ENCODE measurements at regions of chr17 and their contacts with region 1.

Region 1: DNA sequence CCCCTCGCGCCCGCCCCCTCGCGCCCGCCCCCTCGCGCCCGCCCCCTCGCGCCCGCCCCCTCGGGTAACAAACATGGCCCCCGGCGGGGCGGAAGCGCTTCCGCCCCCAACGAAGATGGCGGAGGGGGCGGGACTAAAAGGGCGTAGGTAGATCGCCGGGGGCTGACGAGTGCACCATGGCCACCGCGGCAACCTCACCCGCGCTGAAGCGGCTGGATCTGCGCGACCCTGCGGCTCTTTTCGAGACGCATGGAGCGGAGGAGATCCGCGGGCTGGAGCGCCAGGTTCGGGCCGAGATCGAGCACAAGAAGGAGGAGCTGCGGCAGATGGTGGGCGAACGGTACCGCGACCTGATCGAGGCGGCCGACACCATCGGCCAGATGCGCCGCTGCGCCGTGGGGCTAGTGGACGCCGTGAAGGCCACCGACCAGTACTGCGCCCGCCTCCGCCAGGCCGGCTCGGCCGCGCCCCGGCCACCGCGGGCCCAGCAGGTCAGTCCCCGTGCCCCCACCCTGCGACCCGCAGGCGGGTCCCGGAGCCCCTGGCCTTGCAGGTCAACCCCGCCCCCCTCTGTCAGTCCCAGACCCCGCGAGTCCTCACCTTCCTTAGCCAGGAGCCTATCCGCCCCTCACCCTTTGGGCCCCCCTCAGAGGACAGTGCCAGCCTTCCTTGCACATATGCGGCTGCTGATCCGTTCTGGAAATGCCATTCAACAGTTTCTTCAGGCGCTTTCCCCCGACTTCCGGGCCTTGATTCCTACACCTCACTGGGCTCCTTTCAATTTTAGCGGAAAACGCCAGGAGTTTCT is at the start of gene COG1:
- DNase-seq: peak; percentile 89
- H3K4me3 Mint-ChIP-seq: peak within 1 kb of the TSS; percentile 95
- H3K27ac Mint-ChIP-seq: peak within 1 kb of the TSS; percentile 93
- H3K4me1 Mint-ChIP-seq: peaks cover 6% of the 10 kb centered on the region
- H3K27me3 Mint-ChIP-seq: no peaks in the 10 kb centered on the region
- CTCF ChIP-seq: no peak
- total RNA-seq, gene COG1: 37.0 and 42.8 TPM in 2 replicates

Region 2: DNA sequence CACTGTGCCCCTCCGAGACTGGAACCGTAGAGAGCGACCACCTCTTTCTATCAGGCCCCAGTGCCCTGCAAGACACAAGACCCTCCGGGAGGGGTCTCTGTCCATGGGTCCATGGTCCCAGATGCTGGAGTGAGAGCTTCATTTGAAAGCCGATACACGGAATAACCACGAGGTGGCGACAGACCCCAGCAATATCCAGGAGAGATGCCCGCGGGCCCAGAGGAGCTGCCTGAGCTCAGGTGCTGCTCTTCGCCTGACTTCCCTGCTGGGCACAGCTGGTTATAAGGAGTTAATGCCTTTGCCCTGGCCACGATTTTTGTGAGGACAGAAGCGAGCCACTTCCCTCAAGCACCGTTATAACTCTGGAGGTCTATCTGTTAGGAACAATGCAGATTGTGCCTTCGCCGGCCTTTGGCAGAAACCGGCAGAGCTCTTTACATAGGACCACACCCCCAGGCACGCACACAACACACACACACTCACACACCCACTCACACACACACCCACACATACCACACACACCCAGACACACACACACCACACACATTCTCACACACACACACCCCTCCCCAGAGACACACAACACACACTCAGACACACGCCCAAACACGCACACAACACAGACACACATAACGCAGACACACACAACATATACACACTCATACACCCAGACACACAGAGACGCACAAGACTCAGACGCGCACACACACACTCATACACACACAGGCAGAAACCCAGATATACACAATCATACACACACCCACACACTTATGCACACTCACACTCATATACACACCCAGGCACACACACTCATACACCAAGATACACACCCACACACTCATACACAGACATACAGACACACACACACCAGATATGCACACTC is 635.9 kb before region 1 on chr17:
- CTCF ChIA-PET with region 1: interaction called, 12 read pairs
- POLR2A ChIA-PET with region 1: interaction called, 4 read pairs
- intact Hi-C with region 1: loop called (anchors 5 kb)
- DNase-seq: peak; percentile 81
- H3K4me3 Mint-ChIP-seq: no peak overlapping the region
- H3K27ac Mint-ChIP-seq: no peak overlapping the region
- H3K4me1 Mint-ChIP-seq: peaks cover 21% of the 10 kb centered on the region
- H3K27me3 Mint-ChIP-seq: no peaks in the 10 kb centered on the region
- CTCF ChIP-seq: peak; percentile 85

Region 3: GRCh38 chr17:73211745-73212144 is 18.6 kb after region 1 on chr17:
- CTCF ChIA-PET with region 1: interaction called, 12 read pairs
- POLR2A ChIA-PET with region 1: interaction called, 7 read pairs
- intact Hi-C with region 1: no loop called
- DNase-seq: no peak
- H3K4me3 Mint-ChIP-seq: no peak overlapping the region
- H3K27ac Mint-ChIP-seq: no peak overlapping the region
- H3K4me1 Mint-ChIP-seq: peaks cover 13% of the 10 kb centered on the region
- H3K27me3 Mint-ChIP-seq: no peaks in the 10 kb centered on the region
- CTCF ChIP-seq: no peak

Region 4: DNA sequence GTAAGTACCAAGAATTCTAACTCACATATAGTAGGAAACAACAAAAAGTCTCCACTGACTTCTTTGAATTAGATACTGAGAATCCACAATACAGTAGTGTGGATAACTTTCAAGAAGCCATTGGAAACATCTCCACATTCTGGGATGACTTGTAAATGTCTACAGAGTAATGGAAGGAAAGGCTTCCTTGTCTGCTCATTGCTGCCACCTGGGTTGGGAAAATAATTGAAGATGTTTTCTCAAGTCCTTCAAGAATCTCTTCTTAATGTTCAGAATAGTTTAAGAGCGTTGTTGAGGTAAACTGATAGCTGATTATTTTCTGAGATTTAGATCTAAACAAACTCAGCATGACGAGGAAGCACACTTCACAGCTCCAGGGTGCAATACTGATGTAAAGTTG is 54.6 kb after region 1 on chr17:
- CTCF ChIA-PET with region 1: interaction called, 8 read pairs
- POLR2A ChIA-PET with region 1: interaction called, 3 read pairs
- intact Hi-C with region 1: loop called (anchors 2 kb)
- DNase-seq: no peak
- H3K4me3 Mint-ChIP-seq: no peak overlapping the region
- H3K27ac Mint-ChIP-seq: no peak overlapping the region
- H3K4me1 Mint-ChIP-seq: no peaks in the 10 kb centered on the region
- H3K27me3 Mint-ChIP-seq: no peaks in the 10 kb centered on the region
- CTCF ChIP-seq: no peak

Region 5: GRCh38 chr17:73261952-73262675 is 69.0 kb after region 1 on chr17:
- CTCF ChIA-PET with region 1: no interaction called
- POLR2A ChIA-PET with region 1: no interaction called
- intact Hi-C with region 1: no loop called
- DNase-seq: no peak
- H3K4me3 Mint-ChIP-seq: no peak overlapping the region
- H3K27ac Mint-ChIP-seq: no peak overlapping the region
- H3K4me1 Mint-ChIP-seq: no peaks in the 10 kb centered on the region
- H3K27me3 Mint-ChIP-seq: no peaks in the 10 kb centered on the region
- CTCF ChIP-seq: no peak

Region 6: GRCh38 chr17:73311781-73312641 is 118.9 kb after region 1 on chr17 and contains the start of gene CDC42EP4:
- CTCF ChIA-PET with region 1: no interaction called
- POLR2A ChIA-PET with region 1: interaction called, 4 read pairs
- intact Hi-C with region 1: loop called (anchors 2 kb)
- DNase-seq: peak; percentile 95
- H3K4me3 Mint-ChIP-seq: peak within 1 kb of the TSS; percentile 92
- H3K27ac Mint-ChIP-seq: peak within 1 kb of the TSS; percentile 96
- H3K4me1 Mint-ChIP-seq: peaks cover 17% of the 10 kb centered on the region
- H3K27me3 Mint-ChIP-seq: no peaks in the 10 kb centered on the region
- CTCF ChIP-seq: no peak
- total RNA-seq, gene CDC42EP4: 11.0 and 12.2 TPM in 2 replicates

Measured in MCF 10A (cell line).